ENCODE measurements at regions of chr13 and their contacts with region 1.

Region 1: DNA sequence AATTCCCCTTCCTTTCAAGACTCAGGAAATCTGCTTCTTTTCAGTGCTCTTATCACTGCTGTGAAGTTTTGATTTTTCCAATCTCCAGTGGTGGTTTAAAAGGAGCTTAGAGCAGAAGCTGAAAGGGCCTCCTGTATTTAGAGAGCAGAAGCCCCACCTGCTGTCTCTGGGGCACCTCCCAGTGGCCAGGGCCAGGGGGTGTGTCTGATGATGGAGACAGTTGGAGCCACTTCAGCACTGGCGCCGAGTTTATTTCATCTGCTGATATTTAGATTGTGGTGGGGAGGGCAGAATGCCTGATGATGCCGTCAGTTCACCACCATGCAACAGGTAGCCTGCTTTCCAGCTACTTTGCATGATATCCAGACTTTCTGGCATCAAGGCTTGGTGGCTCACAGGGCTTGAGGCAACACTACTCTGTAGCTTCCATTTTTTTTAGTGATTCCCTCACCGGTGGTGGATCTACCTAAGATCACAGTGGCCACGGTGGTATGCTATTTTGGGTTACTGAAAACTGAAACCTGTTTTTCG is 371.9 kb downstream of the KCNRG start:
- DNase-seq: peak; percentile 9
- ATAC-seq: peak; percentile 56
- H3K4me3 ChIP-seq: no peak overlapping the region
- H3K27ac ChIP-seq: no peak overlapping the region
- H3K4me1 ChIP-seq: peaks cover 12% of the 10 kb centered on the region; the same call in 1 of the 2 replicates
- H3K27me3 ChIP-seq: no peaks in the 10 kb centered on the region
- CTCF ChIP-seq: peak; percentile 24; the same call in 1 of the 2 replicates

Region 2: GRCh38 chr13:50512474-50513299 is 125.6 kb after region 1 on chr13:
- CTCF ChIA-PET with region 1: no interaction called
- POLR2A ChIA-PET with region 1: no interaction called
- intact Hi-C with region 1: loop called (anchors 10 kb)
- DNase-seq: peak; percentile 12
- ATAC-seq: peak; percentile 58
- H3K4me3 ChIP-seq: peak overlapping the region; percentile 60
- H3K27ac ChIP-seq: peak overlapping the region; percentile 11; the same call in 1 of the 2 replicates
- H3K4me1 ChIP-seq: peaks cover 19% of the 10 kb centered on the region
- H3K27me3 ChIP-seq: no peaks in the 10 kb centered on the region
- CTCF ChIP-seq: no peak

Measured in PC-3 (cell line).